ENCODE measurements at regions of chr18 and their contacts with region 1.

Region 1: DNA sequence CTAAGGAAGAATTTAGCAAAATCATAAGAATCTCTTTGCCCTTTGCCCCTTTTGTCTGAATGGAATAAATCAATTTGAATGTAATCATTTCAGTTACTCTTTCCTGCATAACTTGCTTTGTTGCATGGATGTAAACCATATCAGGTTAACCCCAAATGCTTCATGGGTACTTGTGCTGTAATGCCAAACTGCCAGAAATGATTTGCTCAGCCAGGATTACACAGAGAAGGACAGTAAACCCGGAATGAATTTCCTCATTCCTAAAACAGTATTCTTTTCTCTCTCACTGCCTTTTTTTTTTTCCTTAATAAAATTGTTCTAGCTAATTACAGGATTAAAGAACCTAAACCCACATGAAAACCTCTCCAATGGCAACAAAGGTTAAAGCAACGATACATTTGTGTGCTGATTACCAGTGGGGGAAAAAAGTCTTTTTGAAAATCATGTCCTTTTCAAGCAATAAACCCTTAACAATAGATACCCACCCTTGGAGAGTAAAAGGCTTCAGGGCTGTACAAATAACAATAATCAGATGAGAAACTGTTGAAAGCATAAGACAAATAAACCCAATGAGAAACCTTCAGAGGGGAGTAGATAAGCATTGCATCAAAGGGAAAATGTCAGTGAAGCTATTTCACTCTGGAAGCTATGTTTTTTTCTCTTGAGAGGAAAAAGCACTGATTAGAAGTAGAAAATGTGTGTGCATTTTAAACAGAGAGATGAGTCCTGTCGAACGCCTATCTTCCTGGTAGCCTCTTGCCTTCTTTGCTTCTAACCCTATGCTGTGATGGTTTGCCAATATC is 275.3 kb downstream of the CDH2 start:
- DNase-seq: no peak
- H3K4me3 ChIP-seq: no peak overlapping the region
- H3K27ac ChIP-seq: no peak overlapping the region
- H3K4me1 ChIP-seq: no peaks in the 10 kb centered on the region
- H3K27me3 ChIP-seq: no peaks in the 10 kb centered on the region
- CTCF ChIP-seq: no peak
- EP300 ChIP-seq: no peak
- POLR2A ChIP-seq: no peak

Region 2: DNA sequence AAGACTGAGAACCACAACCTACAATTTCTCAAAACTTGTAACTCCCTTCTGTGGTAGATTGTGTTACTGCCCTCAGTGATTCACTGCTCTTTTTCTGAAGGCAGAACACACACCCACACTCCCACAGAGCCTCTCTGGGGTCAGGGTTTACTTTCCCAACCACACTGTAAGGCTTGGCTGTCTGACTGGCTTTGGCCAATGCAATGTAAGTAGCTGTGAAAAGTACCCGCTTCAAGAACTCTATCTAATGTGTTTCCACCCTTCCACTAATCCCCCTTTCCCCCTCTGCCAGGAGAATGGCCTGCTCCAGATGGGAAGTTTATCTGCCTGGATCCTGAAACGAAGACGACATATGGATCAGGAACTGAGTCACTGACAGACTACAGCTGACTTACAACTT is 52.6 kb after region 1 on chr18:
- intact Hi-C with region 1: no loop called
- DNase-seq: no peak
- H3K4me3 ChIP-seq: no peak overlapping the region
- H3K27ac ChIP-seq: no peak overlapping the region
- H3K4me1 ChIP-seq: peaks cover 2% of the 10 kb centered on the region
- H3K27me3 ChIP-seq: no peaks in the 10 kb centered on the region
- CTCF ChIP-seq: no peak
- EP300 ChIP-seq: no peak
- POLR2A ChIP-seq: no peak

Region 3: GRCh38 chr18:29616867-29617266 is 1715.2 kb after region 1 on chr18:
- intact Hi-C with region 1: loop called in 1 of 4 experiments (anchors 5 kb)
- DNase-seq: no peak
- H3K4me3 ChIP-seq: no peak overlapping the region
- H3K27ac ChIP-seq: no peak overlapping the region
- H3K4me1 ChIP-seq: no peaks in the 10 kb centered on the region
- H3K27me3 ChIP-seq: no peaks in the 10 kb centered on the region
- CTCF ChIP-seq: no peak
- EP300 ChIP-seq: no peak
- POLR2A ChIP-seq: no peak